Mammary epithelial cell (primary cell): ENCODE measurements at regions of chr19 and their contacts with region 1.

Region 1: DNA sequence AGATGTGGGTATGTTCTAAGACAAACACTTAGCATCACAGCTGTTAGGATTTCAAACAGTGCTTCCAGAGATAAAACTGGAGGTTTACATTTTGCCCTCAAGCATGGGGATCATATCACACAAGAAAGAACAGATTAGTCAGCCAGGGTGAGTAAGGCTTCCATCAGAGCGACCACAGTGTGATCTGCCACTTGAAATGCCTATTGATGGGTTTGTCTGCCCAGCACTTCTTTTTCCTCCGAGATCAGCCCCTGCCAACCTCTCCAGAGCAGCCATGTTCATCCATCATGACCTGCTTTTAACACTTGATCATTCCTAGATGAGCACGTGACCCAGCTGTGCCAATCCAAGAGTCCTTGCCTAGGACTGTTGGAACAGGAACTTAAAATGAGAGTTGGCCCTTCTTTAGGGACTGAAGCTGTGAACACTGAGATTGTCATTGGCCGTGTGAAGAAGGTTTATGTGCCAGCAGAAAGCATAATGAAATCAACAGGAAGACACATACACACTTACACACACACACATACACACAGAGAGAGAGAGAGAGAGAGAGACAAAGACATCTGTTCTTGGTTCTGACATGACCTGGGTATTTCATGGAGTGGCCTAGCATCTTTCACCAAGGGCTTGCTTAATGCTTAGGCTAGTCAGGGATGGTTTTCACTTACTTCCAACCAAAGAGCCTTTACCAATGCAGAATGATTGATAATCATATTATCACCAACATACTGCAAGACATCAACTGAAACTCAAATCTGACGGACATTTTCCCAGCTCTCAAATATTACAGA is 5.2 kb upstream of the CEBPG start:
- DNase-seq: peak; percentile 91
- H3K4me3 ChIP-seq: no peak overlapping the region
- H3K27ac ChIP-seq: peak overlapping the region; percentile 68
- H3K4me1 ChIP-seq: peaks cover 35% of the 10 kb centered on the region
- H3K27me3 ChIP-seq: no peaks in the 10 kb centered on the region
- CTCF ChIP-seq: no peak

Region 2: GRCh38 chr19:33000510-33000909 is 367.8 kb before region 1 on chr19:
- CTCF ChIA-PET with region 1: no interaction called
- dilution Hi-C with region 1: no loop called
- in situ Hi-C with region 1: no loop called
- intact Hi-C with region 1: no loop called
- DNase-seq: no peak
- H3K4me3 ChIP-seq: no peak overlapping the region
- H3K27ac ChIP-seq: no peak overlapping the region
- H3K4me1 ChIP-seq: no peaks in the 10 kb centered on the region
- H3K27me3 ChIP-seq: no peaks in the 10 kb centered on the region
- CTCF ChIP-seq: no peak

Region 3: GRCh38 chr19:33350538-33351309 is 17.5 kb before region 1 on chr19:
- CTCF ChIA-PET with region 1: no interaction called
- dilution Hi-C with region 1: no loop called
- in situ Hi-C with region 1: no loop called
- intact Hi-C with region 1: loop called (anchors 1 kb)
- DNase-seq: peak; percentile 100
- H3K4me3 ChIP-seq: peak overlapping the region in 1 of 3 experiments; percentile 6
- H3K27ac ChIP-seq: peak overlapping the region; percentile 81
- H3K4me1 ChIP-seq: peaks cover 17% of the 10 kb centered on the region
- H3K27me3 ChIP-seq: no peaks in the 10 kb centered on the region
- CTCF ChIP-seq: no peak